Activated CD4-positive, alpha-beta memory T cell treated with anti-CD3 and anti-CD28 coated beads, Interleukin-2, amount 10 ng/mL, durations not matched to agents 7 days and 5 days (primary cell): ENCODE measurements at regions of chr15 and their contacts with region 1.

Region 1: GRCh38 chr15:80058851-80059785 is at the start of gene ZFAND6:
- DNase-seq: peak; percentile 96
- H3K4me3 Mint-ChIP-seq: peak within 1 kb of the TSS; percentile 84
- H3K27ac Mint-ChIP-seq: peak within 1 kb of the TSS; percentile 90
- H3K4me1 Mint-ChIP-seq: peaks cover 48% of the 10 kb centered on the region
- H3K27me3 Mint-ChIP-seq: peaks cover 5% of the 10 kb centered on the region
- total RNA-seq, gene ZFAND6: 46.7 to 48.7 TPM

Region 2: DNA sequence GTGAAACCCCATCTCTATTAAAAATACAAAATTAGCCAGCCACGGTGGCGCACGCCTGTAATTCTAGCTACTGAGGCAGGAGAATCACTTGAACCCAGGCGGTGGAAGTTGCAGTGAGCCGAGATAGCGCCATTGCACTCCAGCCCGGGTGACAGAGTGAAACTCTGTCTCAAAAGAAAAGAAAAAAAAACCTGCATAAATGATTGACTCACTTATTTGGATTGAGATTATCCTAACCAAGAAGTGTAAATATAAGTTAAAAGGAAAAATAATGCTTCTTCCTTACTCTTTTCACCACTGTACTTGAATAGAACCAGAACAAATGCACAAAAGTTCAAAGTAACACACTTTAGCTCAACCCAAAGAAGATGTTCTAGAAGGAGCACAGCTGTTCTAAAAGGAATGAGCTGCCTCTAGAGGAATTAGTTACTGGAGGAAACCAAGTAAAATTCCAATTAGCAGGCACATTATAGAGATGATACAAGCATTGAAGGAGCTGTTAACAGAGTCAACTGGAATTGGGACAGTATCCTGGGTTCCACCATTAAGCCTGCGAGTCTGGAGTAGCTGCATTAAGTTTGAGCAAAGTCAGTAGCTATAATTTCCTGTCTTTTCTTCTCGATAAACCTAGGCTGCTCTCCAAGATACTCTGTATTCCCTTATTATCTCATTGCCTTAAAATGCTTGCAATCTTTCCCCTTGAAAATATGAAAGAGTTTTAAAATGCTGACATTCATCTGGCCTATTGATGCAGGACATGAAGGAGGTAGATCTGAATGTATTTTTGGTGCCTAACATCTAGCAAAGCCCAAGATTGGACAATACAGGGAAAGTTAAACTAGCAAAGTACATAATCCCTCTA is 171.8 kb before region 1 on chr15:
- CTCF ChIA-PET with region 1: no interaction called
- POLR2A ChIA-PET with region 1: no interaction called
- DNase-seq: no peak
- H3K4me3 Mint-ChIP-seq: no peak overlapping the region
- H3K27ac Mint-ChIP-seq: no peak overlapping the region
- H3K4me1 Mint-ChIP-seq: peaks cover 11% of the 10 kb centered on the region
- H3K27me3 Mint-ChIP-seq: no peaks in the 10 kb centered on the region

Region 3: GRCh38 chr15:79970624-79971434 is 88.3 kb before region 1 on chr15 and contains the start of gene BCL2A1:
- CTCF ChIA-PET with region 1: no interaction called
- POLR2A ChIA-PET with region 1: interaction called, 14 read pairs
- DNase-seq: peak; percentile 59
- H3K4me3 Mint-ChIP-seq: peak within 1 kb of the TSS; percentile 83
- H3K27ac Mint-ChIP-seq: peak within 1 kb of the TSS; percentile 76
- H3K4me1 Mint-ChIP-seq: peaks cover 59% of the 10 kb centered on the region
- H3K27me3 Mint-ChIP-seq: no peaks in the 10 kb centered on the region
- total RNA-seq, gene BCL2A1: 12.3 to 14.1 TPM

Region 4: GRCh38 chr15:80031841-80032240 is 27.3 kb before region 1 on chr15:
- CTCF ChIA-PET with region 1: interaction called, 3 read pairs
- POLR2A ChIA-PET with region 1: interaction called, 28 read pairs
- DNase-seq: peak; percentile 30
- H3K4me3 Mint-ChIP-seq: no peak overlapping the region
- H3K27ac Mint-ChIP-seq: peak overlapping the region; percentile 83
- H3K4me1 Mint-ChIP-seq: peaks cover 35% of the 10 kb centered on the region
- H3K27me3 Mint-ChIP-seq: no peaks in the 10 kb centered on the region

Region 5: GRCh38 chr15:80072285-80072994 is 13.3 kb after region 1 on chr15:
- CTCF ChIA-PET with region 1: interaction called, 5 read pairs
- POLR2A ChIA-PET with region 1: interaction called, 25 read pairs
- DNase-seq: no peak
- H3K4me3 Mint-ChIP-seq: peak overlapping the region; percentile 71
- H3K27ac Mint-ChIP-seq: peak overlapping the region; percentile 50
- H3K4me1 Mint-ChIP-seq: peaks cover 36% of the 10 kb centered on the region
- H3K27me3 Mint-ChIP-seq: no peaks in the 10 kb centered on the region

Region 6: DNA sequence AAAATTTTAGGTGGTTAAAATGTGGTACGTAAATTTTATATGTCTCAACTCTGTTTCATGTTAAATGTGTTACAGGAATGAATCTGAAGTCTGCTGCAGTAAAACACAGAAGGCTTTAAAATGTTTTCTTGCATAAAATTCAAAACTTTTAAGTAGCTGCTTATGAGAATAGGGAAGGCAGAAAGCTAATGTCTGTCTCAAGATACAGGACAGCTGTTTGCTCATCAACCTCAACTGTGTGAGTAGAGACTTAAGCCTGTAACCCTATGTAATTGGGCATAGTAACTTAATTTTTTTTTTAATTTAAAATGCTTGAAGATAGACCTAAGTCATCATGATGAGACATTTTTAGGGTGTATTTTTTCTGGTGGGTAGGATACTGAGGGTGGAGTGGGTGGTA is 39.2 kb after region 1 on chr15:
- CTCF ChIA-PET with region 1: no interaction called
- POLR2A ChIA-PET with region 1: no interaction called
- DNase-seq: no peak
- H3K4me3 Mint-ChIP-seq: no peak overlapping the region
- H3K27ac Mint-ChIP-seq: no peak overlapping the region
- H3K4me1 Mint-ChIP-seq: peaks cover 6% of the 10 kb centered on the region
- H3K27me3 Mint-ChIP-seq: no peaks in the 10 kb centered on the region

Region 7: GRCh38 chr15:80152180-80152845 is 93.2 kb after region 1 on chr15:
- CTCF ChIA-PET with region 1: interaction called, 3 read pairs
- POLR2A ChIA-PET with region 1: interaction called, 23 read pairs
- DNase-seq: peak; percentile 95
- H3K4me3 Mint-ChIP-seq: peak overlapping the region; percentile 76
- H3K27ac Mint-ChIP-seq: peak overlapping the region; percentile 47
- H3K4me1 Mint-ChIP-seq: peaks cover 33% of the 10 kb centered on the region
- H3K27me3 Mint-ChIP-seq: peaks cover 10% of the 10 kb centered on the region

Region 8: GRCh38 chr15:80160570-80161156 is 101.5 kb after region 1 on chr15:
- CTCF ChIA-PET with region 1: interaction called, 4 read pairs
- POLR2A ChIA-PET with region 1: interaction called, 18 read pairs
- DNase-seq: peak; percentile 79
- H3K4me3 Mint-ChIP-seq: no peak overlapping the region
- H3K27ac Mint-ChIP-seq: peak overlapping the region; percentile 85
- H3K4me1 Mint-ChIP-seq: peaks cover 30% of the 10 kb centered on the region
- H3K27me3 Mint-ChIP-seq: no peaks in the 10 kb centered on the region